Heart left ventricle (tissue), 16 donors: ENCODE measurements at regions of chr14 and their contacts with region 1.

Region 1: DNA sequence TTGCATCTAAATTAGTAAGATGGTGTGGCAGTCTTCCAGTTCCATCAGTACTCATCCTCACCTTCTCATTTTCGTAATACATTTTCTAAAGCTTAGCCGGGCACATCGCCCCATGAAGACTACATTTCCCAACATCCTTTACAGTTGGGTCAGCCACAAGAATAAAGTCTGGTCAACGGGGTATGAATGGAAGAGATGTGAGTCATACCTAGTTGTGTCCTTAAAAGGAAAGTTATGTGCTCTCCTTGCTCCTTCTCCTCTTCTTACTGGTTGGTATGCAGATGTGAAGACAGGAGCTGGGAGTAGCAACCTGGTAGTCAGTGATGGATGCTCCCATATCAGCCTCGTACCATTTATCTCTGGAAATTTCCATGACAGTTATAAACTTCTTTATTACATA is 35.9 kb upstream of the EGLN3 start:
- DNase-seq: no peak
- ATAC-seq: peak in 1 of 4 donors; percentile 55
- H3K4me3 ChIP-seq: no peak overlapping the region
- H3K27ac ChIP-seq: no peak overlapping the region
- H3K4me1 ChIP-seq: peaks cover 0 to 15% (median 7%) of the 10 kb centered on the region in 12 donors
- H3K27me3 ChIP-seq: no peaks in the 10 kb centered on the region
- CTCF ChIP-seq: no peak
- POLR2A ChIP-seq: no peak

Region 2: GRCh38 chr14:33490555-33490954 is 496.2 kb before region 1 on chr14:
- intact Hi-C with region 1: no loop called
- DNase-seq: no peak
- ATAC-seq: no peak
- H3K4me3 ChIP-seq: no peak overlapping the region
- H3K27ac ChIP-seq: no peak overlapping the region
- H3K4me1 ChIP-seq: no peaks in the 10 kb centered on the region
- H3K27me3 ChIP-seq: no peaks in the 10 kb centered on the region
- CTCF ChIP-seq: no peak
- POLR2A ChIP-seq: no peak

Region 3: GRCh38 chr14:33556382-33557121 is 430.3 kb before region 1 on chr14:
- intact Hi-C with region 1: loop called in 1 of 10 experiments (anchors 10 kb)
- DNase-seq: no peak
- ATAC-seq: no peak
- H3K4me3 ChIP-seq: no peak overlapping the region
- H3K27ac ChIP-seq: no peak overlapping the region
- H3K4me1 ChIP-seq: peaks cover 0 to 3% (median 0%) of the 10 kb centered on the region in 12 donors
- H3K27me3 ChIP-seq: no peaks in the 10 kb centered on the region
- CTCF ChIP-seq: no peak
- POLR2A ChIP-seq: no peak